ENCODE measurements at regions of chr10 and their contacts with region 1.

Region 1: DNA sequence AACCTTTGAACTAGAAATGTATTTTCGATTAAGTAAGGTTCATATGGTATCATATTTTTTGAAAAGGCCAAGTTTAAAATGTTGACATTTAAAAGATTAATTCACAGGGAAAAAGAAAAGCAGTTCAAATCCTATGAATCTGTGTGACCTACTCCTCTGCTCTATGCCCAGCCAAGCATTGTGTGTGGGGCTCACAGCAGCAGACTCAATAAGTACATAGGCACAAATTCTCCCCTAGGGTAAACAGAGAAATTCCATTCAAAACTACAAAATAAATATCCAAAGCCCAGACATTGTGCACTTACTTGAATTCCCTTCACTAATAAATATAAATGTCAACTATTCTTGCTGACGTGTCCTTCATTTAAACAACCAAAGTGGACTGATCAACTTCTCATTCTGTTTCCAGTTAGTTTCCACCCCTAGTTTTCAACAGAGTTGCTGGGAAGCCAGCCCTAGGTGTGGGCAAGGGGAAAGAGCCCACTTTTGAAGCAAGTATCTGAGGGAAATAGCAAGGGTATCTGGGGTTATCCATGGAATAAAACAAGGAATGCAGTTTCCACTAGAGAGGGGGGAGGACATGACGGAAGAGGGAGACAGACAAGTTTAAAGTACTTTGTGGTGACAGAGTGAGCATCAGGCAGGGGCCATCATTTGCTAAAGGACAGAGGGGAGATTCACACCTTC is 533.3 kb downstream of the SORCS1 start:
- DNase-seq: no peak
- ATAC-seq: no peak
- H3K4me3 Mint-ChIP-seq: no peak overlapping the region
- H3K27ac Mint-ChIP-seq: no peak overlapping the region
- H3K4me1 Mint-ChIP-seq: no peaks in the 10 kb centered on the region
- H3K27me3 Mint-ChIP-seq: no peaks in the 10 kb centered on the region
- CTCF ChIP-seq: no peak

Region 2: GRCh38 chr10:107037192-107038122 is 406.3 kb after region 1 on chr10:
- CTCF ChIA-PET with region 1: no interaction called
- POLR2A ChIA-PET with region 1: no interaction called
- intact Hi-C with region 1: loop called (anchors 5 kb)
- DNase-seq: no peak
- ATAC-seq: no peak
- H3K4me3 Mint-ChIP-seq: no peak overlapping the region
- H3K27ac Mint-ChIP-seq: no peak overlapping the region
- H3K4me1 Mint-ChIP-seq: no peaks in the 10 kb centered on the region
- H3K27me3 Mint-ChIP-seq: peaks cover 1% of the 10 kb centered on the region
- CTCF ChIP-seq: no peak

Measured in activated CD8-positive, alpha-beta T cell treated with anti-CD3 and anti-CD28 coated beads for 36 hours (primary cell).